ENCODE measurements at regions of chr1 and their contacts with region 1.

Region 1: GRCh38 chr1:227946624-227947385 is 927 bp downstream of the WNT9A start:
- DNase-seq: peak; percentile 72 to 86
- ATAC-seq: peak; percentile 89

Region 2: GRCh38 chr1:227482023-227482299 is 464.8 kb before region 1 on chr1:
- intact Hi-C with region 1: loop called in 1 of 2 experiments (anchors 5 kb)
- DNase-seq: no peak
- ATAC-seq: no peak

Region 3: GRCh38 chr1:227734856-227735538 is 211.8 kb before region 1 on chr1 and contains the starts of genes JMJD4 and SNAP47:
- intact Hi-C with region 1: loop called in 1 of 2 experiments (anchors 10 kb)
- DNase-seq: peak; percentile 89 to 92
- ATAC-seq: peak; percentile 91
- total RNA-seq, gene JMJD4: 11.1 to 11.9 TPM
- total RNA-seq, gene SNAP47: 18.6 to 20.5 TPM

Region 4: GRCh38 chr1:227762233-227762911 is 184.4 kb before region 1 on chr1:
- intact Hi-C with region 1: loop called (anchors 5 to 10 kb)
- DNase-seq: peak; percentile 84 to 92
- ATAC-seq: peak; percentile 89